ENCODE measurements at regions of chr12 and their contacts with region 1.

Region 1: GRCh38 chr12:82942991-82943401 is 256.3 kb downstream of the TMTC2 start:
- DNase-seq: no peak
- H3K4me3 ChIP-seq: no peak overlapping the region
- H3K27ac ChIP-seq: no peak overlapping the region
- H3K4me1 ChIP-seq: peaks cover 12% of the 10 kb centered on the region
- H3K27me3 ChIP-seq: no peaks in the 10 kb centered on the region
- CTCF ChIP-seq: no peak

Region 2: DNA sequence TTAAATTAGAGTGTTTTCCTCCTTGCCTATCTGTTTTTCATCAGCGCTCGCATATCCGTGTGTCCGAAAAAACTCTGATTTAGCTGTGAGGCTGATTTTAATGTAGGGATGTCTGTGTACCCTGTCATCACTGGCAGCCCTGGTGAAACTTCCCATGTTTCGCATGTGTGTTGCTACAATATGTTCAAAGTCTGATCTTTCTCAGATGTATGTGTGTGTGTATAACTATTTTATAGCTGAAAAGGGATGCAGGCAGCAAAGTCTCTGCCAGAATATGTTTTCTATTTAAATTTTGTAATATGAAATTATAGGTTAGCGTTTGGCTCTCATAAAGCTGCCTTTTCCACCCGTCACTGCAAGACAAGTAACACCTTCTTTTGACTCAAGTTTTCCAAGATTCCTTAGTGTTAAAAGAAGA is 101.5 kb before region 1 on chr12:
- CTCF ChIA-PET with region 1: no interaction called
- POLR2A ChIA-PET with region 1: no interaction called
- intact Hi-C with region 1: no loop called
- DNase-seq: no peak
- H3K4me3 ChIP-seq: no peak overlapping the region
- H3K27ac ChIP-seq: no peak overlapping the region
- H3K4me1 ChIP-seq: peaks cover 28% of the 10 kb centered on the region
- H3K27me3 ChIP-seq: no peaks in the 10 kb centered on the region
- CTCF ChIP-seq: no peak

Region 3: DNA sequence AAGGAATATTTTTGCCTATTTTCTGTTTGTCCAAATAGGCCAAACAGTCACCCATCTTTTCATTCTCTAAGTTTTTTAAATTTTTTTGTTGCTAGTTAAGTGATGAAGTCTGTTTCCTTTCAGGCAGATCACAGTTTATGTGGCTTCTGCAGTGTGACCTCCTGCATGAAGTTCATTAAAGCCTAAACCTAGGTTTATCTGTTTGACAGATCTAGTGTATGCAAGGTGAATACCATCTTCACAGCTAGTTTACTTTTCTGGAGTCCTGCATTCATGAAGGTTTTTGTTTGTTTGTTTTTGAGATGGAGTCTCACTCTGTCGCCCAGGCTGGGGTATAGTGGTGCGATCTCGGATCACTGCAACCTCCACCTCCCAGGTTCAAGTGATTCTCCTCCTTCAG is 33.9 kb before region 1 on chr12:
- CTCF ChIA-PET with region 1: no interaction called
- POLR2A ChIA-PET with region 1: no interaction called
- intact Hi-C with region 1: loop called (anchors 1 kb)
- DNase-seq: no peak
- H3K4me3 ChIP-seq: no peak overlapping the region
- H3K27ac ChIP-seq: no peak overlapping the region
- H3K4me1 ChIP-seq: no peaks in the 10 kb centered on the region
- H3K27me3 ChIP-seq: no peaks in the 10 kb centered on the region
- CTCF ChIP-seq: no peak

Region 4: DNA sequence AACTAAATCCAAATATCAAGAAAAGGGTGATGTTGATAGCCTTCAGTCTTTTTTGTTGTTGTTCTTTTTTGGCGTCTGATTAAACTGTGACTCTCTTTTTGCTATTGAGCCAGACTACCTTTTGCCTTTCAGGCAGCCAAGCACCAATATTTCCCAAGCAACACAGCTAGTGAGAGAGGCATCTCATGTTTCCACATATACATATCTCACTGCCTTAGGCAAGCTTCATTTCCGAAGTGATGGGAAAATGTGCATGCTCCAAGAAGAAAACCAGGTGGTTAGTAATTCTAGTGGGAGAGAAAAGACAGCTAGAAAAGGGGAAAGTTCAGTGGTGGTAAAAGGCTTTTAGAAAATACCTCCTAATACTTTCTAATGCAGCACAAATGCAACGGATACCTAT is 21.4 kb after region 1 on chr12:
- CTCF ChIA-PET with region 1: no interaction called
- POLR2A ChIA-PET with region 1: no interaction called
- intact Hi-C with region 1: no loop called
- DNase-seq: no peak
- H3K4me3 ChIP-seq: no peak overlapping the region
- H3K27ac ChIP-seq: no peak overlapping the region
- H3K4me1 ChIP-seq: peaks cover 58% of the 10 kb centered on the region
- H3K27me3 ChIP-seq: no peaks in the 10 kb centered on the region
- CTCF ChIP-seq: no peak

Measured in A673 (cell line).